Cardiac septum (tissue), 1 donor: ENCODE measurements at regions of chr15 and their contacts with region 1.

Region 1: GRCh38 chr15:99565299-99566156 is at the start of gene MEF2A:
- DNase-seq: peak; percentile 98
- total RNA-seq, gene MEF2A: 195 TPM

Region 2: DNA sequence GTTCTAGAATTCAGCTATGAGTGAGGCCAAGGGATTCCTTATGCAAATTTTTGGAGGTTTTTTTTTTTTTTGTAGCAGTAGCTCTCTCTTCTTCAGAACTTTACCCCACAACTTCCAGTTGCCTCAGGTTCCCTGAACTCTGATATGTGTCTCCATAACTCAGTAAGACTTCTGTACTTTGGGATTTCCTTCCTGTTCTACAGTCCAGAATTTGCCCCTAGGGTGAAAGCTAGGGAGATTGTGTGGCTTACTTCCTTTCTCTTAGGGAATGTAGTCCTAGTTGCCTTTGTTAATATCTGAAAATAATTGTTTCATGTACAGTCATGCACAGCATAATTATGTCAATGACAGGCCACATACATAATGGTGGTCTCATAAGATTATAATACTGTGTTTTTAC is 283.4 kb before region 1 on chr15:
- intact Hi-C with region 1: loop called (anchors 10 kb)
- DNase-seq: no peak

Region 3: DNA sequence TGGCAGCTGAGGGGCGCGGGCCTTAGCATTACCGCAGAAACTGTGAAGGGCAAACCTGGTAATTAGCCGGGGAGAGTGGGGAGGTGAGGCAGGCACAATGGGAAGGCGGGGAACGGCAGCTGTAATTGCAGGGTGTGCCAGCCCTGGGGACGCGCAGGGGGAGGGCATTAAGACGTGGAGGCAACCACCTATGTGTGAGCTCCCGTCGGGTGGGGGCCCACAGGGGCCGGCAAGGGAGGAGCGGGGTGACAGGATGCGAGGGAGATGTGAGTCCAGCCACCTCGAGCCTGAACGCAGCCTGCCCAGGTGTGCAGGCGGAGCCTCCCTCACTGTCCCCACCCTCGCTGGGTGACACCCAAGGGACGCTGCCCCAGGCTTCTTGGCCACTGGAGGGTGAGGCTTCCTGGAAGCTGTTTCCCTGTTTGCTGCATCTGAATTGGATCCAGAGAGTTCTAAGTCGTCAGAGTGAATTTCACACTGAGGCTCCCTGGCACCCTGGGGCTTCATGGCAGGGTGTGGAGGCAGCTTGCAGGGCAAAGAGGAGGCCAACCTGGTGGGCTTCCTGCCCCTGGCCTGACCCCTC is 130.3 kb before region 1 on chr15:
- intact Hi-C with region 1: loop called (anchors 5 kb)
- DNase-seq: peak; percentile 74

Region 4: DNA sequence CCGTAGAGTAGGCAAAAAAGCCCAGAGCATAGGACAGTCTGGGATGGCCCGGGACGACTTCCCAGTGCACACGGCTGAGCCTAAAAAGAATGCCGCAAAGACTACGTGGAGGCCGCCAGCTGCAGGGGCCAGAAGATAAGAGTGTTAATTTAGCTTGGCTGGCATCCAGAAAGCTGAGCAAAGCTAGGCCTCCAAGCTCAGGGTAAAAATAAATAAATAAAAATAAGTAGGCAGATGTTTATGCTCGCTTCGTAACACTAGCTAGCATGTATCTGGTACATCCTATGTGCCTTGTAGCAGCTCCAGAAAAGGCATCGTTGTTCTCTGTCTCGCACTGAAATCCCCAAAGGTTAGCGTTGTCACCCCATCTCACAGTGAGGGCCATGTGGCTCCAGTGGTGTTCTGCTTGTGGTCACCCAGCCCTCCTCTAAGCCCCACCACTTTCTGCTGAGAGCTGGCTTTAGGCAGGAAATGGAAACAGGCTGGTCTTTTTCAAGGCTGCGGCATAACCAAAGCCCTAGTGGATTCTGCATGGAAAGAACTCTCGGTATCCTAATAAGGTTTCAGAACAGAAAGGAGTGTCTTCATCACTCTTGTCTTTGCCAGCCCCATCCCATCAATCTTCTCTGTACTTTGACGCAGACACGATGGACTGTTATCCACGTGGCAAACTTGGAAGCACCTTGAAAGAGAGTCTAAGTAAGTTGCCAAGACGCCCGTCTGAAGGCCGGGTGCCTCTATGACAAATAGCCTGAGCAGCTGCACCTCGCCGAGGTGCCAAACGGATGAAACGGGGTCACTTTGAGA is 57.8 kb before region 1 on chr15:
- intact Hi-C with region 1: loop called (anchors 2 kb)
- DNase-seq: no peak

Region 5: GRCh38 chr15:99704444-99704838 is 138.9 kb after region 1 on chr15:
- intact Hi-C with region 1: loop called (anchors 2 kb)
- DNase-seq: no peak